CD4-positive, alpha-beta memory T cell (primary cell): ENCODE measurements at regions of chr9 and their contacts with region 1.

Region 1: GRCh38 chr9:126558051-126558665 is 55.6 kb upstream of the LMX1B start:
- DNase-seq: peak; percentile 51 to 68 (median 56)
- H3K4me3 ChIP-seq: no peak overlapping the region
- H3K4me3 Mint-ChIP-seq: no peak overlapping the region
- H3K27ac ChIP-seq: no peak overlapping the region
- H3K27ac Mint-ChIP-seq: peak overlapping the region in 1 of 7 donors; percentile 57
- H3K4me1 ChIP-seq: no peaks in the 10 kb centered on the region
- H3K4me1 Mint-ChIP-seq: peaks cover 0 to 1% (median 0%) of the 10 kb centered on the region in 4 donors
- H3K27me3 ChIP-seq: peaks cover 6% of the 10 kb centered on the region
- H3K27me3 Mint-ChIP-seq: peaks cover 15 to 24% of the 10 kb centered on the region in 2 donors

Region 2: DNA sequence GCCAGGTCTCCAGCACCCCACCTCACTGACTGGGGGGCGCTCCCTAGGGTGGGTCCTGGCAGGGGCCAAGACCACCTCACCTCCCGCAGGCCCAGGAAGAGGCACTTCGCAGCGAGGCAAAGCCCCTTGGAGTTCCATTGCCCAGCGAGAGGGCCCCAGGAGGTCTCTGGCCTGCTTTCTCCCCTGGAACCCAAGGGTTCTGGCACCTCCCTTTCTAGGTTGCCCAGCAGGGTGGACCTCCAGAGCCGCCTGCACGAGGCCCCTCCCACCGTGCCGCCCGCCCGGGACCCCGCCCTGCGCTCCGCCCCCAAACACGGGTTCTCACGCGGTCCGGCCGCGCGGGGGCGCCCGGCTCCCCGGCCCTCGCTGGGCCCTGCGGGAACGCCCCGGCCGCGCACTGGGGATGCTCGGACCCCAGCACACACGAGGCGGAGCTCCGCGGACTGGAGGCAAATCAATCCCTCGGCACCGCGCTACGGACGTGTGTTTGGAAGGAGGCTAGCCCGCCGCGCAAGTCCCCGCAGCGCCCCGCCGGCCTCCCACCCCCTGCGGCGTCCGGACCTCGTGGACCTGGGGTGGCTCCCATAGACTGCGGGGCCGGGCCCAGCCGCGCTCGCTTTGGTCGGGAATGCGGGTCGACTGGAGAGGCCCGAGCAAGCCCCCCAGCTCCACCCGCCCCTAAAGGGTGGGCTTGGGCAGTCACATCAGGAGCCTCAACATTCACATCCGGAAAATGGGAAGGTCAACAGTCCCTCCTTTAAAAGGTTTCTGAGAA is 43.9 kb before region 1 on chr9:
- CTCF ChIA-PET with region 1: interaction called, 74 read pairs
- POLR2A ChIA-PET with region 1: interaction called, 12 read pairs
- intact Hi-C with region 1: loop called (anchors 1 kb)
- DNase-seq: peak in 4 of 5 donors; percentile 40 to 52 (median 51)
- H3K4me3 ChIP-seq: no peak overlapping the region
- H3K4me3 Mint-ChIP-seq: peak overlapping the region in 2 of 8 donors; percentile 26 to 48
- H3K27ac ChIP-seq: no peak overlapping the region
- H3K27ac Mint-ChIP-seq: peak overlapping the region in 1 of 7 donors; percentile 19
- H3K4me1 ChIP-seq: peaks cover 33% of the 10 kb centered on the region
- H3K4me1 Mint-ChIP-seq: peaks cover 16 to 48% (median 28%) of the 10 kb centered on the region in 4 donors
- H3K27me3 ChIP-seq: peaks cover 12% of the 10 kb centered on the region
- H3K27me3 Mint-ChIP-seq: peaks cover 17 to 31% of the 10 kb centered on the region in 2 donors

Region 3: GRCh38 chr9:126527109-126527825 is 30.9 kb before region 1 on chr9:
- CTCF ChIA-PET with region 1: interaction called, 14 read pairs
- POLR2A ChIA-PET with region 1: no interaction called
- intact Hi-C with region 1: no loop called
- DNase-seq: no peak
- H3K4me3 ChIP-seq: no peak overlapping the region
- H3K4me3 Mint-ChIP-seq: no peak overlapping the region
- H3K27ac ChIP-seq: no peak overlapping the region
- H3K27ac Mint-ChIP-seq: peak overlapping the region in 2 of 7 donors; percentile 49 to 50
- H3K4me1 ChIP-seq: peaks cover 13% of the 10 kb centered on the region
- H3K4me1 Mint-ChIP-seq: peaks cover 12 to 21% (median 16%) of the 10 kb centered on the region in 4 donors
- H3K27me3 ChIP-seq: no peaks in the 10 kb centered on the region
- H3K27me3 Mint-ChIP-seq: peaks cover 0 to 5% of the 10 kb centered on the region in 2 donors

Region 4: GRCh38 chr9:126569036-126569435 is 10.9 kb after region 1 on chr9:
- CTCF ChIA-PET with region 1: interaction called, 15 read pairs
- POLR2A ChIA-PET with region 1: no interaction called
- intact Hi-C with region 1: no loop called
- DNase-seq: no peak
- H3K4me3 ChIP-seq: no peak overlapping the region
- H3K4me3 Mint-ChIP-seq: no peak overlapping the region
- H3K27ac ChIP-seq: no peak overlapping the region
- H3K27ac Mint-ChIP-seq: no peak overlapping the region
- H3K4me1 ChIP-seq: no peaks in the 10 kb centered on the region
- H3K4me1 Mint-ChIP-seq: no peaks in the 10 kb centered on the region
- H3K27me3 ChIP-seq: no peaks in the 10 kb centered on the region
- H3K27me3 Mint-ChIP-seq: peaks cover 17 to 25% of the 10 kb centered on the region in 2 donors

Region 5: DNA sequence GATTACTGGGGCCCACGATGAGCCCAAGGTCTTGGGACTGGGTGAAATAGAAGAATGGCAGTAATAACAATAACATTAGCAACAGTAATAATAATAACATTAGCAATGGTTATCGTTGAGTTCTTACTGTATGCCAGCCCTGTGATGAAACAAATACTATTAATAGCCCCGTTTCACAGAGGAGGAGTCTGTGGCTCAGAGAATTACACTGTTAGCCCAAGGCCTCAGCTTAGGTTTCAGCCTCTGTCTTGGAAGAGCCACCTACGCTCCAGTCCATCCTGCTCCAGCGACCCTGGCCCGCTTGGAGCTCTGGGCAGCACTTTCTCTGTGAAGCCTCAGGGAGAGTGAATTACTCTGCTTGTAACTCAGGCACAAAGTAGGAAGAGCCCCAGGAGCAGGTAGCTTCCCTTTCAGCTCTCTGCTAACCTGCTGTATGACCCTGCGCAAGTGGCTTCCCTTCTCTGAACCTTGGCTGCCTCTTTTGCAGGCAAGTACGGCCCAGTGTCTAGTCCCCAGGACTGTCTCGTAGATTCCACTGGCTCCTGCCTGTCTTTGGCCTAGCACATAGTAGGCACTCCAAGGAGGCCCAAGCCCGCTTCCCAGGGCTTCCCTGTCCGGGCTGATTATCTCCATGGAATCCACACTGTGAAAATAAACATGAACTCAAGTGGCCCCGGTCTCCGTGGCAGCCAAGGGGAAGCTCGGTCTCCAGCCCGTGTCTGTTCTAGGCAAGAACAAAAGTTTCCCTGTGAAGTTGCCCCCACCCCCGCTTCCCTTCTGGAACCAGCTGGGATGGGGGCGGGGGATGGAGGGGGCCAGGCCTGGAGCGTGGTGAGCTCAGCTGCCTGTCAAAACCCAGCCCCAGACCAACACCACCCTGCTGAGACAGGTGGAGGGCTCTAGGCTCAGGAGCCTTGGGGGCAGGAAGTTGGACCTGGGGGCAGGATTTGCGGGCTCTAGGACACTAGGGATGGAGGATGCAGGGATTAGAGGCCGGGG is 29.3 kb after region 1 on chr9:
- CTCF ChIA-PET with region 1: no interaction called
- POLR2A ChIA-PET with region 1: no interaction called
- intact Hi-C with region 1: no loop called
- DNase-seq: no peak
- H3K4me3 ChIP-seq: no peak overlapping the region
- H3K4me3 Mint-ChIP-seq: no peak overlapping the region
- H3K27ac ChIP-seq: no peak overlapping the region
- H3K27ac Mint-ChIP-seq: no peak overlapping the region
- H3K4me1 ChIP-seq: no peaks in the 10 kb centered on the region
- H3K4me1 Mint-ChIP-seq: no peaks in the 10 kb centered on the region
- H3K27me3 ChIP-seq: peaks cover 3% of the 10 kb centered on the region
- H3K27me3 Mint-ChIP-seq: peaks cover 40 to 54% of the 10 kb centered on the region in 2 donors